Activated CD4-positive, alpha-beta T cell treated with anti-CD3 and anti-CD28 coated beads for 36 hours (primary cell): ENCODE measurements at regions of chr11 and their contacts with region 1.

Region 1: GRCh38 chr11:14764579-14765527 is 121.2 kb downstream of the PDE3B start:
- DNase-seq: peak; percentile 50
- ATAC-seq: peak; percentile 76
- H3K4me3 Mint-ChIP-seq: peak overlapping the region; percentile 62
- H3K27ac Mint-ChIP-seq: no peak overlapping the region
- H3K4me1 Mint-ChIP-seq: peaks cover 42% of the 10 kb centered on the region
- H3K27me3 Mint-ChIP-seq: no peaks in the 10 kb centered on the region

Region 2: GRCh38 chr11:14519917-14520746 is 244.7 kb before region 1 on chr11 and contains the start of gene PSMA1:
- CTCF ChIA-PET with region 1: interaction called, 3 read pairs
- POLR2A ChIA-PET with region 1: no interaction called
- intact Hi-C with region 1: loop called (anchors 1 to 2 kb)
- DNase-seq: peak; percentile 98
- ATAC-seq: peak; percentile 87
- H3K4me3 Mint-ChIP-seq: peak within 1 kb of the TSS; percentile 93
- H3K27ac Mint-ChIP-seq: peak within 1 kb of the TSS; percentile 95
- H3K4me1 Mint-ChIP-seq: peaks cover 25% of the 10 kb centered on the region
- H3K27me3 Mint-ChIP-seq: no peaks in the 10 kb centered on the region
- total RNA-seq, gene PSMA1: 231 to 330 TPM

Region 3: GRCh38 chr11:14544611-14545010 is 220.2 kb before region 1 on chr11:
- CTCF ChIA-PET with region 1: no interaction called
- POLR2A ChIA-PET with region 1: no interaction called
- intact Hi-C with region 1: loop called (anchors 1 kb)
- DNase-seq: no peak
- ATAC-seq: peak; percentile 79
- H3K4me3 Mint-ChIP-seq: no peak overlapping the region
- H3K27ac Mint-ChIP-seq: peak overlapping the region; percentile 72
- H3K4me1 Mint-ChIP-seq: peaks cover 40% of the 10 kb centered on the region
- H3K27me3 Mint-ChIP-seq: no peaks in the 10 kb centered on the region

Region 4: GRCh38 chr11:14713496-14714244 is 51.2 kb before region 1 on chr11:
- CTCF ChIA-PET with region 1: no interaction called
- POLR2A ChIA-PET with region 1: no interaction called
- intact Hi-C with region 1: loop called in 1 of 2 experiments (anchors 5 kb)
- DNase-seq: peak; percentile 40
- ATAC-seq: peak; percentile 89
- H3K4me3 Mint-ChIP-seq: peak overlapping the region; percentile 23
- H3K27ac Mint-ChIP-seq: peak overlapping the region; percentile 83
- H3K4me1 Mint-ChIP-seq: peaks cover 36% of the 10 kb centered on the region
- H3K27me3 Mint-ChIP-seq: no peaks in the 10 kb centered on the region

Region 5: GRCh38 chr11:14892036-14892567 is 127.2 kb after region 1 on chr11 and contains the start of gene CYP2R1:
- CTCF ChIA-PET with region 1: interaction called, 5 read pairs
- POLR2A ChIA-PET with region 1: interaction called, 7 read pairs
- intact Hi-C with region 1: loop called (anchors 1 kb)
- DNase-seq: peak; percentile 94
- ATAC-seq: peak; percentile 84
- H3K4me3 Mint-ChIP-seq: peak within 1 kb of the TSS; percentile 81
- H3K27ac Mint-ChIP-seq: peak within 1 kb of the TSS; percentile 96
- H3K4me1 Mint-ChIP-seq: peaks cover 52% of the 10 kb centered on the region
- H3K27me3 Mint-ChIP-seq: peaks cover 2% of the 10 kb centered on the region
- total RNA-seq, gene CYP2R1: 13.1 to 14.8 TPM